Kidney (tissue), 22 donors: ENCODE measurements at regions of chr9 and their contacts with region 1.

Region 1: GRCh38 chr9:21465859-21466518 is 16.1 kb downstream of the IFNE start:
- DNase-seq: peak in 2 of 5 donors; percentile 64 to 70
- H3K4me3 ChIP-seq: no peak overlapping the region
- H3K27ac ChIP-seq: no peak overlapping the region
- H3K4me1 ChIP-seq: no peaks in the 10 kb centered on the region
- H3K27me3 ChIP-seq: no peaks in the 10 kb centered on the region
- CTCF ChIP-seq: peak; percentile 41

Region 2: GRCh38 chr9:20962536-20963225 is 503.3 kb before region 1 on chr9:
- intact Hi-C with region 1: no loop called
- DNase-seq: no peak
- H3K4me3 ChIP-seq: no peak overlapping the region
- H3K27ac ChIP-seq: no peak overlapping the region
- H3K4me1 ChIP-seq: no peaks in the 10 kb centered on the region
- H3K27me3 ChIP-seq: no peaks in the 10 kb centered on the region
- CTCF ChIP-seq: no peak

Region 3: GRCh38 chr9:21789541-21790037 is 323.6 kb after region 1 on chr9:
- intact Hi-C with region 1: loop called (anchors 2 kb)
- DNase-seq: peak in 3 of 5 donors; percentile 46 to 93 (median 89)
- H3K4me3 ChIP-seq: peak overlapping the region in 2 of 3 donors; percentile 32 to 37
- H3K27ac ChIP-seq: no peak overlapping the region
- H3K4me1 ChIP-seq: no peaks in the 10 kb centered on the region
- H3K27me3 ChIP-seq: no peaks in the 10 kb centered on the region
- CTCF ChIP-seq: peak; percentile 70